Activated CD4-positive, alpha-beta memory T cell treated with anti-CD3 and anti-CD28 coated beads for 36 hours (primary cell): ENCODE measurements at regions of chr18 and their contacts with region 1.

Region 1: GRCh38 chr18:77067291-77068061 is 65.1 kb downstream of the MBP start:
- DNase-seq: peak; percentile 83
- H3K4me3 Mint-ChIP-seq: peak overlapping the region; percentile 54
- H3K27ac Mint-ChIP-seq: peak overlapping the region; percentile 91
- H3K4me1 Mint-ChIP-seq: peaks cover 100% of the 10 kb centered on the region
- H3K27me3 Mint-ChIP-seq: no peaks in the 10 kb centered on the region

Region 2: GRCh38 chr18:76374330-76375281 is 692.9 kb before region 1 on chr18:
- CTCF ChIA-PET with region 1: no interaction called
- POLR2A ChIA-PET with region 1: no interaction called
- intact Hi-C with region 1: loop called (anchors 10 kb)
- DNase-seq: peak; percentile 75
- H3K4me3 Mint-ChIP-seq: no peak overlapping the region
- H3K27ac Mint-ChIP-seq: peak overlapping the region; percentile 64
- H3K4me1 Mint-ChIP-seq: peaks cover 50% of the 10 kb centered on the region
- H3K27me3 Mint-ChIP-seq: peaks cover 1% of the 10 kb centered on the region

Region 3: GRCh38 chr18:76822510-76823160 is 244.8 kb before region 1 on chr18 and contains the start of gene ZNF236:
- CTCF ChIA-PET with region 1: no interaction called
- POLR2A ChIA-PET with region 1: interaction called, 3 read pairs
- intact Hi-C with region 1: loop called (anchors 5 kb)
- DNase-seq: peak; percentile 72
- H3K4me3 Mint-ChIP-seq: peak within 1 kb of the TSS; percentile 89
- H3K27ac Mint-ChIP-seq: peak within 1 kb of the TSS; percentile 87
- H3K4me1 Mint-ChIP-seq: peaks cover 51% of the 10 kb centered on the region
- H3K27me3 Mint-ChIP-seq: no peaks in the 10 kb centered on the region
- total RNA-seq, gene ZNF236: 14.4 to 15.6 TPM

Region 4: GRCh38 chr18:77054606-77055428 is 12.7 kb before region 1 on chr18:
- CTCF ChIA-PET with region 1: interaction called, 63 read pairs
- POLR2A ChIA-PET with region 1: interaction called, 14 read pairs
- intact Hi-C with region 1: loop called (anchors 1 kb)
- DNase-seq: peak; percentile 90
- H3K4me3 Mint-ChIP-seq: peak overlapping the region; percentile 81
- H3K27ac Mint-ChIP-seq: peak overlapping the region; percentile 96
- H3K4me1 Mint-ChIP-seq: peaks cover 72% of the 10 kb centered on the region
- H3K27me3 Mint-ChIP-seq: no peaks in the 10 kb centered on the region

Region 5: DNA sequence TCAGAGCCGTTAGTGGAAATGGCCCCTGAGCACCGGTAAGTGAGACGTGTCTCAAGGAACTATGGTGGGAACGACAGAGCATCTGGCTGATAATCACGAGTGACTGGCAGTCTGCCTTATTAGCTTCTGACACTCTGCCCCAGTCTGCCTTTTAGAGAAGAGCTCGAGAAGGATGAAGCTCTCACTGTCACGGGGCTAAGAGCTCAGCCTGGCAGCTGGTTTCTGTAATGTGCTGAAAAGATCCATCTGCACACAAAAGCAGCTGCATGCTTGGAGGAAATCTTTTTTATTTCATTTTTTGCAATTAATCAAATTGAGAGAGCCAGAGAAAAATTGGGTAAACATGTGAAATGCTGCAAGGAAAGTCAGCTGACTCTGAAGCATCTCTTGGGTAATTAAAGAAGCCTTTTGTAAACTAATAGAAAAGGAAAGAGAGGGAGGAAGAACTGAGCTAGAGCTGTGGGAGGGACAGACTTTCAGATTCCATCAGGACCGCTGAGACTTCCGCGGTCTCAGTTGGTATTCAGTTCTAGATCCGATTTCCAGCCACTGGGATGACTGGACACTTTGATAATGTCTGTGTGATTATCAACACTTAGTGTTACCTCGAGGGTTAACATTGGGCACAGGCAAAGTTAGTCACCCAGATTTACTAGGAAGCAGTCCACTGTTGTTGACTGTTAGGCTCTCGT is 40.7 kb after region 1 on chr18:
- CTCF ChIA-PET with region 1: interaction called, 17 read pairs
- POLR2A ChIA-PET with region 1: interaction called, 23 read pairs
- intact Hi-C with region 1: no loop called
- DNase-seq: peak; percentile 79
- H3K4me3 Mint-ChIP-seq: peak overlapping the region; percentile 31
- H3K27ac Mint-ChIP-seq: peak overlapping the region; percentile 71
- H3K4me1 Mint-ChIP-seq: peaks cover 92% of the 10 kb centered on the region
- H3K27me3 Mint-ChIP-seq: no peaks in the 10 kb centered on the region

Region 6: DNA sequence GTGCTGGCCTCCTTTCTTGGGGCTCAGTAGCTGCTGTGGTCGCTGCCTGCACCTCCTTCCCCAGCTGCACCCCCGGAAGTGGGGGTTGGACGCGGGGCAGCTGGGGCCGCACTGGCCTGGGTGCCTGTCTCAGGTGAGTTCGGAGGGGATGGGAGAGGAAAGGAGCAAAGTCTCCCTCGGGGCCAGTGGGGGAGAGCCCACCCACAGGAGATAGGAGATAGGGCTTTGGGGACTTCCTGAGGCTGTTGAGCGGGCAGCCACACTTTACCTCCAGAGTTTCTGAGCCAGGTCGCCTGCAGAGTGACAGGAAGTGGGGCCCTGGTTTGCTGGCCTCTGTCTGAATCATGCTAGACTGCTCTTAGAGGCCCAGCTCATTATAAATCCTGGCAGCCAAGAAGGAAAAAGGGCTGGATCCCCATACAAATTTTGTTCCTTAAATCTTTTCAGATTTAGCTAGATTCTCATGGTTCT is 57.0 kb after region 1 on chr18:
- CTCF ChIA-PET with region 1: interaction called, 18 read pairs
- POLR2A ChIA-PET with region 1: interaction called, 12 read pairs
- intact Hi-C with region 1: loop called (anchors 1 kb)
- DNase-seq: peak; percentile 80
- H3K4me3 Mint-ChIP-seq: peak overlapping the region; percentile 75
- H3K27ac Mint-ChIP-seq: peak overlapping the region; percentile 93
- H3K4me1 Mint-ChIP-seq: peaks cover 93% of the 10 kb centered on the region
- H3K27me3 Mint-ChIP-seq: no peaks in the 10 kb centered on the region

Region 7: DNA sequence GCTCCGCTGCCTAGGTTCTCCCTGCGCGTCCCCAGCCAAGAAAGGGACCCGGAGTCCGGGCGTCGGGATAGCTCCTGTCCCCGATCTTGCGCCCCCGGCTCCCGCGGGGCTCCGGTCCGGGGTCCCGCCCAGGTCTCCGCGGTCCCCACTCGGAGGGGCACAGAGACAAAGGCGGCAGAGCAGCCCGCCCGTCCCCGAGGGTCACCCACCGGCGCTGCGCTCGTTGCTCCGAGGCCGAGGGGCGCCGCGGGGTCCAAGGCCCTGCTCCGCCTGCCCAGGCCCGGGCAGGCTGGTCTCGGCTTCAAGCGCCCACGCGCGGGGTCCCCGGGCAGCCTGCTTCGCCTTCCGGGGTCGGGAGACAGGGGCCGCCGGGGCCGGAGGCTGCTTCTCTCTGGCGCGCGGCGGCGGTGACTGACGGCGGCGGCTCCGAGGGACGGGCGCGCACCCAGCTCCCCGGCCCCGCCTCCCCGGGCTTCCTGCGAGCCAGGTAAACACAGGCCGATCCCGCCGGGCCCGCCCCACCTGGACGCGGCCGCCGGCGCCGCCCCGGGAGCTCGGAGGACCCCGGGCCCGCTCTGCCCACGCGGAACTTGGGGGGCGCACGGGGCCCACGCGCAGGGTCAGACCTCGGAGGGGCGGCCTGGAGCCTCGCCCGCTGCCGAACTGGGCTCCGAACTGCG is 65.0 kb after region 1 on chr18 and contains the start of gene MBP:
- CTCF ChIA-PET with region 1: interaction called, 6 read pairs
- POLR2A ChIA-PET with region 1: interaction called, 19 read pairs
- intact Hi-C with region 1: loop called (anchors 1 kb)
- DNase-seq: peak; percentile 79
- H3K4me3 Mint-ChIP-seq: peak within 1 kb of the TSS; percentile 96
- H3K27ac Mint-ChIP-seq: peak within 1 kb of the TSS; percentile 93
- H3K4me1 Mint-ChIP-seq: peaks cover 44% of the 10 kb centered on the region
- H3K27me3 Mint-ChIP-seq: no peaks in the 10 kb centered on the region
- total RNA-seq, gene MBP: 38.9 to 40.4 TPM

Region 8: GRCh38 chr18:77597726-77598125 is 530.2 kb after region 1 on chr18:
- CTCF ChIA-PET with region 1: no interaction called
- POLR2A ChIA-PET with region 1: no interaction called
- intact Hi-C with region 1: no loop called
- DNase-seq: no peak
- H3K4me3 Mint-ChIP-seq: no peak overlapping the region
- H3K27ac Mint-ChIP-seq: no peak overlapping the region
- H3K4me1 Mint-ChIP-seq: no peaks in the 10 kb centered on the region
- H3K27me3 Mint-ChIP-seq: no peaks in the 10 kb centered on the region